Endothelial cell of umbilical vein (primary cell): ENCODE measurements at regions of chr21 and their contacts with region 1.

Region 1: DNA sequence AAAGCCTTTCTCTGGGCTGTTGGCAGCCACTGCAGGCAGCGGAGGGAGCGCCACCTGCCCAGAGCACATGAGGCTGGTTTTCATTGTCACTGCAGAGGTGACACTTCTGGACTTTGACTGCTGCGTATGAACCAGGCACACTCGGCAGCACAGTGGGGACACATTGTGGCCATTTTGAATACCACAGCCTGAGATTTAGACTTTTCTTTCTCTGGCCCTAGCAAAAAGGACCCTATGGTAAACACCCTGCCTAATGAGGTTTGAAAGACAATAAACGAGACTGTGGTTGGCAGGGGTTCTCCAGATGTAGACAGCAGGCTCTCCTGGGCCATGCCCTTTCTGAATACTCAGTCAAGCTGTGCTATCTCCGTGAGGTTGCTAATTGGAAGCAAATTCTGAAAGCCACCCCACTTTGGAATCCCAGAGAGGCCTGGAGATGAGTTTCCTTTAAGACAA is 12.0 kb upstream of the KCNE2 start:
- DNase-seq: peak; percentile 39
- H3K4me3 ChIP-seq: no peak overlapping the region
- H3K27ac ChIP-seq: no peak overlapping the region
- H3K4me1 ChIP-seq: no peaks in the 10 kb centered on the region
- H3K27me3 ChIP-seq: peaks cover 12 to 17% of the 10 kb centered on the region in 2 experiments
- CTCF ChIP-seq: peak; percentile 35 to 55
- POLR2A ChIP-seq: no peak

Region 2: GRCh38 chr21:33947451-33948095 is 404.2 kb before region 1 on chr21:
- CTCF ChIA-PET with region 1: interaction called, 12 read pairs
- POLR2A ChIA-PET with region 1: no interaction called
- dilution Hi-C with region 1: no loop called
- intact Hi-C with region 1: no loop called
- DNase-seq: peak; percentile 95
- H3K4me3 ChIP-seq: peak overlapping the region in 1 of 3 experiments; percentile 43
- H3K27ac ChIP-seq: peak overlapping the region; percentile 80
- H3K4me1 ChIP-seq: peaks cover 19% of the 10 kb centered on the region
- H3K27me3 ChIP-seq: no peaks in the 10 kb centered on the region
- CTCF ChIP-seq: no peak
- POLR2A ChIP-seq: no peak

Region 3: GRCh38 chr21:34073032-34073869 is 278.6 kb before region 1 on chr21 and contains the starts of genes MRPS6 and SLC5A3:
- CTCF ChIA-PET with region 1: interaction called, 12 read pairs
- POLR2A ChIA-PET with region 1: no interaction called
- dilution Hi-C with region 1: no loop called
- intact Hi-C with region 1: no loop called
- DNase-seq: peak; percentile 81
- H3K4me3 ChIP-seq: peak within 1 kb of the TSS; percentile 79 to 83 (median 80)
- H3K27ac ChIP-seq: peak within 1 kb of the TSS; percentile 65
- H3K4me1 ChIP-seq: peaks cover 10% of the 10 kb centered on the region
- H3K27me3 ChIP-seq: peaks cover 0 to 1% of the 10 kb centered on the region in 2 experiments
- CTCF ChIP-seq: no peak
- POLR2A ChIP-seq: peak; percentile 88
- total RNA-seq, gene MRPS6: 35.5 and 37.2 TPM in 2 replicates
- total RNA-seq, gene SLC5A3: 6.8 and 8.0 TPM in 2 replicates

Region 4: DNA sequence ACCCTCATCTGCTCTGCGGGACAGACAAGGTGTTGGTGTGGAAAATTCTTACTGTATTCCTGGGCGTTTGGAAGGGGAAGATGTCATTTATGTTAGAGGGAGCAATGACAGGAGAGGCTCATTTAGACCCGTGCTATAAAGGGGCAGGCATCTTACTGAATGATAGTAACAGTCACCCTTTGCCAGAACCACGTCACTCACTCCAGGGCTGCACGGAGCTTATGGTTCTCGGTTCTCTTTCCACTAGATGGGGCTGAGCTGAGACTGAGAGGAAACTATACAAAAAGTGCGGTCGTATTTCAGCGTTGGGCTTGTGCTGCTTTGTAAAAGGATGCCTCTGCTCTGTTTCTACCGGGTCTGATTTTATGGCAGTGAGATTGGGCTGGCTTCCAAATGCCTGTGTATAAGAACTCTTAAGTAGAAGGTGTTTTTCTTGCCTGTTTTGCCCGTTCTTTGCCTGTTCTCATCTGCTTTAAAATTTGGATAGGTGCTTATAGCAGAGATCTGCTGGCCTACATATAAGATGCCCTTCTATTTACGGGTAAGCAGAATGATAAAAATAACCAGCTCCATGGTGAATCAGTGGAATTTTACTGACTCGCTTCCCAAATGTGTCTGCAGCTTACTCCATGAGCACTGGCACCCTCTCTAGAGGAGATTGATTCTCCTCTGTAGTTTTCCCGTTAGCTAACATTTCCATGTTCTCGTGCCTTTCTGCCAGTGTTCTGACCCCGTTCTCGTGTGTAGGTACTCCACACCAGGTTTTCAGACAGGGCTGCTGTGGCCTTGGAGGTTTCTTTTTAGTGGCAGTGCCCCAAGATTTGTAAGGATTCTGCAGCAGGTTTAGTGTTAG is 222.5 kb before region 1 on chr21:
- CTCF ChIA-PET with region 1: interaction called, 14 read pairs
- POLR2A ChIA-PET with region 1: no interaction called
- dilution Hi-C with region 1: no loop called
- intact Hi-C with region 1: no loop called
- DNase-seq: peak; percentile 79
- H3K4me3 ChIP-seq: no peak overlapping the region
- H3K27ac ChIP-seq: no peak overlapping the region
- H3K4me1 ChIP-seq: peaks cover 6% of the 10 kb centered on the region
- H3K27me3 ChIP-seq: no peaks in the 10 kb centered on the region
- CTCF ChIP-seq: peak in 1 of 2 donors; percentile 49
- POLR2A ChIP-seq: no peak

Region 5: DNA sequence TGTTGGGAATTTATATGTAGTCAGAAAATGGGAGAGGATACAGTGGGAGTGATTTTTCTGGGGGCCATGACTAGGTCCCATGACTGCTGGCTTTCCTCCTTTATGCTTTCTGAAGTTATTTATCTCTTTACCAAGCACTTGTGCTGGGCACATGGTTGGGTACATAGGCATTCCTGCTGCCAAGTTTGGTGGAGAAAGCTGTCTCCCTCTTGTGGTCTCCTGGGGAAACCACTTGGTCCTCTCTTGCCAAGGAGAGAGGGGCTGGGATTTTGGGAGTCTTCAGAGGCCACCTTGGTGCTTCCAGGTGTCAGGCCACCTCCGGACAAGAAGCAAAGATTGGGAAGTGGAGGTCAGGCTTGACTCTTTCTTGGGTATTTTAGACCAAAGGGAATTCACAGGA is 108.3 kb before region 1 on chr21:
- CTCF ChIA-PET with region 1: interaction called, 22 read pairs
- POLR2A ChIA-PET with region 1: no interaction called
- dilution Hi-C with region 1: no loop called
- intact Hi-C with region 1: no loop called
- DNase-seq: peak; percentile 31
- H3K4me3 ChIP-seq: no peak overlapping the region
- H3K27ac ChIP-seq: no peak overlapping the region
- H3K4me1 ChIP-seq: no peaks in the 10 kb centered on the region
- H3K27me3 ChIP-seq: peaks cover 2 to 5% of the 10 kb centered on the region in 2 experiments
- CTCF ChIP-seq: peak; percentile 53 to 62
- POLR2A ChIP-seq: no peak

Region 6: DNA sequence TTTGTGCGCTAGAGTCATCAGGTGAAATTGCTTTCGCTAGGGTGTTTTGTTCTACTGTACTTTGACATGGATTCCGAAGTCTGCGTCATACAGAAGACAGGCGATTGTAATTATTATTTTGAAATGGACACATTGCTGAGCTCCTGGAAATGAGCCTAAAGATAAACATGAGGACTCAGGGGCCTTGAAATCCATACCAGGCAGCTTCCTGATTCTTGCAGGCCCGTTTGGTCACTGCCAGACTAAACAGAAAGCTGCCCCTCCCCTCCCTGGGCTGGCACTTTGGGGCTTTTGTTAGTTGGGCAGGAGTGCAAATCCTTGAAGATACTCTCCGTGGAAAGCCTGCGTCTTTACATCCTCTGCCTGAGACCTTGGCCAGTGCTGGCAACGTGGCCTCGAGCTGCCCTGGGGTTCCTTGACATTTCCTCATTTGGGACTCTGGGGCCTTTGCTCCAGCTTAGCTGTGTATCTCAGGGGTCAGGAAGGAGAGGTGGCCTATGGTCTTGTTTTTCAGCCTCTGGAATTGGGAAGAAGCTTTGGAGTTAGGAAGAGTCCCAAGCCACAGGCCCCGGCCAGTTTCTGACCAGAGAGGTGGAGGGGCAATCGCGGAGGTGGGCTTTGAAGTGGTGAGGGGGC is 14.9 kb before region 1 on chr21:
- CTCF ChIA-PET with region 1: interaction called, 64 read pairs
- POLR2A ChIA-PET with region 1: no interaction called
- dilution Hi-C with region 1: no loop called
- intact Hi-C with region 1: no loop called
- DNase-seq: peak; percentile 48
- H3K4me3 ChIP-seq: no peak overlapping the region
- H3K27ac ChIP-seq: no peak overlapping the region
- H3K4me1 ChIP-seq: peaks cover 10% of the 10 kb centered on the region
- H3K27me3 ChIP-seq: peaks cover 0 to 2% of the 10 kb centered on the region in 2 experiments
- CTCF ChIP-seq: no peak
- POLR2A ChIP-seq: no peak

Region 7: GRCh38 chr21:34367321-34367935 is 15.6 kb after region 1 on chr21:
- CTCF ChIA-PET with region 1: interaction called, 25 read pairs
- POLR2A ChIA-PET with region 1: no interaction called
- dilution Hi-C with region 1: no loop called
- intact Hi-C with region 1: no loop called
- DNase-seq: peak; percentile 55
- H3K4me3 ChIP-seq: no peak overlapping the region
- H3K27ac ChIP-seq: no peak overlapping the region
- H3K4me1 ChIP-seq: no peaks in the 10 kb centered on the region
- H3K27me3 ChIP-seq: peaks cover 11 to 12% of the 10 kb centered on the region in 2 experiments
- CTCF ChIP-seq: peak; percentile 46 to 53
- POLR2A ChIP-seq: no peak

Region 8: GRCh38 chr21:34771512-34772028 is 419.8 kb after region 1 on chr21:
- CTCF ChIA-PET with region 1: no interaction called
- POLR2A ChIA-PET with region 1: no interaction called
- dilution Hi-C with region 1: no loop called
- intact Hi-C with region 1: no loop called
- DNase-seq: peak; percentile 11
- H3K4me3 ChIP-seq: no peak overlapping the region
- H3K27ac ChIP-seq: no peak overlapping the region
- H3K4me1 ChIP-seq: no peaks in the 10 kb centered on the region
- H3K27me3 ChIP-seq: peaks cover 21 to 42% of the 10 kb centered on the region in 2 experiments
- CTCF ChIP-seq: no peak
- POLR2A ChIP-seq: no peak